PC-9 (cell line): ENCODE measurements at regions of chr16 and their contacts with region 1.

Region 1: GRCh38 chr16:84308120-84308519 is 13.4 kb downstream of the WFDC1 start:
- DNase-seq: peak; percentile 55 to 59
- H3K4me3 ChIP-seq: no peak overlapping the region
- H3K27ac ChIP-seq: no peak overlapping the region
- H3K4me1 ChIP-seq: no peaks in the 10 kb centered on the region
- H3K27me3 ChIP-seq: no peaks in the 10 kb centered on the region
- CTCF ChIP-seq: peak; percentile 81

Region 2: DNA sequence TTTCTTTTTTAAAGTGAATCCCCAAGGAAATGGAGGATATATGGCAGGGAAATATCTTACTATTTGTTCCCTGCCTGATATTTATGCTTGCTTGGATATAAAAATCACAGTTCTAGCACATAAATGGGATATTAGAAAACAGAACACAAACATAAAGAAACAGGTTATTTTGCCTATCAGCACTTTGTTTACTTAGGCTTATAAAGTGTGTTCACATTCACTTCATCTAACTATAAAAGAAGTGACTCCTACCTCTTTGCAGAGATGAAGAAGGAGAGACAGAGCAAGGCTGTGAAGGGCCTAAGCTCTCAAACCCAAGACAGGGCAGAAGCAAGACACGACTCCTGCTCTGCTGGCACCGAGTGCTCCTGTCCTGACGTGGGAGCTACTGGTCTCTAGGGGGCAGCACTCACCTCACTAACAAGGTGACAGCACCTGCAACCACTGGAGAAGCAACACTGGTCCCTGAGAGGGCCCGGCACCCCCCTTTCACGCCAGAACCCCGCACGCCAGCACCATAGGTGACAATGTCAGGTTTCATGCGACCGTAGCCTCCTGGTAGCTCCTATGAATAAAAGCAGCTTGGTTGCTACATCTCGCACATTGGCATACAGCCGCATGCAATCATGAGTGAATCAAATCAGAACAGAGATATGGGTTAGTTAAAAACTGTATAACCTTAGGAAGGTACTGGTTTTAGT is 223.4 kb before region 1 on chr16:
- CTCF ChIA-PET with region 1: interaction called, 5 read pairs
- POLR2A ChIA-PET with region 1: no interaction called
- intact Hi-C with region 1: loop called (anchors 1 kb)
- DNase-seq: peak; percentile 45 to 68
- H3K4me3 ChIP-seq: no peak overlapping the region
- H3K27ac ChIP-seq: no peak overlapping the region
- H3K4me1 ChIP-seq: no peaks in the 10 kb centered on the region
- H3K27me3 ChIP-seq: no peaks in the 10 kb centered on the region
- CTCF ChIP-seq: peak; percentile 91

Region 3: GRCh38 chr16:84186685-84187437 is 121.3 kb before region 1 on chr16 and contains the start of gene TAF1C:
- CTCF ChIA-PET with region 1: interaction called, 4 read pairs
- POLR2A ChIA-PET with region 1: interaction called, 6 read pairs
- intact Hi-C with region 1: loop called (anchors 2 kb)
- DNase-seq: peak; percentile 86 to 88
- H3K4me3 ChIP-seq: peak within 1 kb of the TSS; percentile 99
- H3K27ac ChIP-seq: no peak within 1 kb of the TSS
- H3K4me1 ChIP-seq: peaks cover 10% of the 10 kb centered on the region; the same call in 1 of the 2 replicates
- H3K27me3 ChIP-seq: no peaks in the 10 kb centered on the region
- CTCF ChIP-seq: peak; percentile 93
- total RNA-seq, gene TAF1C: 40.2 and 43.0 TPM in 2 replicates

Region 4: DNA sequence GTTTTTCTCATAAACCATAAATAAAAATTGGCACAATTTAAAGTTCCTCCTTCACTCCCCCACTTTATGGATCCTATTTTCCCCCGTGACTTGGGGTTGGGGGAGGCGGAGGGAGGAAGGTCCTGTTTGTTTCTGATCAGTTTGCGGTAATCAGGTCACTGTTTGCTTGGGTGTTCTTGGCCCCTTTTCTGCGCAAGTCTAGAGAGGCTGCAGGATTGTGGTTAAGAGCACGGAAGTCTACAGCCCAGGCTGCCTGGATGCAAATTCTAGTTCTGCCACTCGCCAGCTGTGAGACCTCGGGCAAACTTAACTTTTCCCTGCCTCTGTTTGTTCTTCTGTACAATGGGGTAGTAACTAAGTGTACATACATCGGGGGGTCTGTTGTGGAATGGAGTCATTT is 72.3 kb after region 1 on chr16:
- CTCF ChIA-PET with region 1: interaction called, 14 read pairs
- POLR2A ChIA-PET with region 1: no interaction called
- intact Hi-C with region 1: no loop called
- DNase-seq: no peak
- H3K4me3 ChIP-seq: no peak overlapping the region
- H3K27ac ChIP-seq: no peak overlapping the region
- H3K4me1 ChIP-seq: peaks cover 12% of the 10 kb centered on the region; the same call in 1 of the 2 replicates
- H3K27me3 ChIP-seq: no peaks in the 10 kb centered on the region
- CTCF ChIP-seq: no peak